Psoas muscle (tissue), 8 donors: ENCODE measurements at regions of chr16 and their contacts with region 1.

Region 1: DNA sequence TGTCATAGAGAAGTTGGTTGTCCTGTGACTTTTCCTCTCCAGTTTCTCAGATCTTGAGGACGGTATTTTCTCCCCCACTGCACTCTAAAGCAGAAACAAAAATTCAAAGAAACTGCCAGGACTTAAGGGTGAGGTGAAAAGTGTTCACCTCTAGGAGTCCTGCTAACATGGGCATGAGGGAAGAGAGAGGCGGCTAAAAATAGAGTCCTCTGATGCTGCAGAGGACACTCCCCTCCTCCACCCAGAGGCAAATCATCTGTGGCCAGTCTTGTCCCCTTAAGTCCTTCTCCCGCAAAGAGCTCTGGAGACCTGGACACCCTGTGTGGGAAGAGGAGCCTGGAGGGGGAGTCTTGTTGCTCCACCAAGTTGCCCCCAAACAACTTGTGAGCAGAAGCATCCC is 4.7 kb upstream of the DDX19A start:
- DNase-seq: no peak
- ATAC-seq: peak in 3 of 4 donors; percentile 42 to 58 (median 55)
- H3K4me3 ChIP-seq: no peak overlapping the region
- H3K27ac ChIP-seq: no peak overlapping the region
- H3K4me1 ChIP-seq: peaks cover 3% of the 10 kb centered on the region
- H3K27me3 ChIP-seq: no peaks in the 10 kb centered on the region
- CTCF ChIP-seq: no peak

Region 2: DNA sequence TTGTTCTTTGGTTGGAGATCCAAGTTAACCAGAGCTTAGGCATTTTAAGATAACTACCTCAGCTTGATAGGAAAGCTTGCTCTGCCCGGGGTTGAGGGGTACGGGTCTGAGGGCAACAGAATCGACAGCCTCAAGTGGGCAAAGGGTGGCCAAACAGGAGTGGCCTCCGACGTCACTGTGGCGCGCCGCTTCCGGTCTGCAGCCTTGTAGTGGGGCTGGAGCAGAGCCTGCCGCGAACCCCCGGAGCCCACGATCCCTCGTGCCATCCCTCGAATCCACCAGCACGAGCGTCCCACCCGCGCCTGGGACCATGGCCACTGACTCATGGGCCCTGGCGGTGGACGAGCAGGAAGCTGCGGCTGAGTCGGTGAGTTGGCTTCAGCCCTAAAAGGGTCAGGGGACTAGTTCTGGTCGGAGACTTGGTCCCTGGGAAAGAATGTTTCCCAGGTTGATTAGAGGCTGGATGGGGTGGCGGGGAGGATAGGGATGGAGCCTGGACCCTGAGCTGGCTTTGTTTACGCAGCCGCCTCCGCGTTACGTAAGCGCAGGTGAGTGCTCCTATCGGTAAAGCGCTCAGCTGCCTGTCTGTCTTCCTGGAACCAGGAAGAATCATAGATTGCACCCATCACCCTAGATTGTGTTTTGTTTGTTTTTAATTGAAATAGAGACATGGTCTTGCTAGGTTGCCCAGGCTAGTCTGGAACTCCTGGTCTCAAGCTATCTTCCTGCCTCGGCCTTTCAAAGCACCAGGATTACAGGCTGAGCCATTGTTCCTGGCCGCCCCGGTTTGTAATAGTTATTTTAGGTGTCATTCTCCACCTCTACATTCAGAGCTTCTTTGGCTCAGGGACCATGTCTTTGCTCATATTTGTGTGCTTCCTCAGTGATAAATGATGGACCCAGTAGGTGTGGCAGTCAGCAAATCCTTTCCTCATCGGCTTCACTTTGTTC is 42.8 kb before region 1 on chr16 and contains the start of gene DDX19B:
- intact Hi-C with region 1: loop called (anchors 1 to 5 kb)
- DNase-seq: peak; percentile 85 to 91
- ATAC-seq: peak; percentile 96 to 97 (median 96)
- H3K4me3 ChIP-seq: peak within 1 kb of the TSS; percentile 83
- H3K27ac ChIP-seq: peak within 1 kb of the TSS; percentile 99
- H3K4me1 ChIP-seq: peaks cover 8% of the 10 kb centered on the region
- H3K27me3 ChIP-seq: no peaks in the 10 kb centered on the region
- CTCF ChIP-seq: no peak
- total RNA-seq, gene DDX19B: 15.0 to 21.4 (median 17.4) TPM

Region 3: DNA sequence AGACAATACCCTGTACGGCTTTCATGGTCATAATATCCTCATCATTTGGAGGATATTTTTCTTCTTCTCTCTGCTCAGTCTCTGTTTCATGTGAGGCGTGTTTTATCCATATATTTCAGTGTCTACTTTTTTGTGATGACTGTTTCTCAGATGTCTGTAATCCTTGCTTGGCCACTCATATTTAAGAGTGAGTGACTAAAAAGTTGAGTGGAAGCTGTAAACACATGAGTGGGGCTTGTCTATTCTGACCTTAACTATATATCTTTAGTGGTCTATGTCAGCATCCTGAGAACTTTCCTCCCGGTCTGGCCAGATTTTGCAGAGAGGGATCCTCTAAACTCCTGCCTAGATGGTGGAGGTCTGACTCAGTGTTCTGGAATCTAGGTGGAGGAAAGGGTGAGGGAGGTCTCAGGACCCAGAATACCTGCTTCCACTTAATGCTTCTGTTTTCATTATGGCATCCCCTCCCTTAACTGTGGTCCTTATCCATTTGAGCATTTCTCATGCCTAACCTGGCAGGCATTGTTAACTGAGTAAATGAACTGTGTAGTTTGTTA is 37.0 kb before region 1 on chr16:
- intact Hi-C with region 1: loop called in 1 of 2 experiments (anchors 5 kb)
- DNase-seq: no peak
- ATAC-seq: no peak
- H3K4me3 ChIP-seq: no peak overlapping the region
- H3K27ac ChIP-seq: no peak overlapping the region
- H3K4me1 ChIP-seq: peaks cover under 1% of the 10 kb centered on the region
- H3K27me3 ChIP-seq: no peaks in the 10 kb centered on the region
- CTCF ChIP-seq: no peak

Region 4: GRCh38 chr16:70395345-70395901 is 53.4 kb after region 1 on chr16:
- intact Hi-C with region 1: no loop called
- DNase-seq: peak; percentile 71 to 87
- ATAC-seq: peak; percentile 67 to 75 (median 73)
- H3K4me3 ChIP-seq: no peak overlapping the region
- H3K27ac ChIP-seq: no peak overlapping the region
- H3K4me1 ChIP-seq: peaks cover 15% of the 10 kb centered on the region
- H3K27me3 ChIP-seq: no peaks in the 10 kb centered on the region
- CTCF ChIP-seq: peak; percentile 73